Endothelial cell of umbilical vein (primary cell): ENCODE measurements at regions of chr2 and their contacts with region 1.

Region 1: DNA sequence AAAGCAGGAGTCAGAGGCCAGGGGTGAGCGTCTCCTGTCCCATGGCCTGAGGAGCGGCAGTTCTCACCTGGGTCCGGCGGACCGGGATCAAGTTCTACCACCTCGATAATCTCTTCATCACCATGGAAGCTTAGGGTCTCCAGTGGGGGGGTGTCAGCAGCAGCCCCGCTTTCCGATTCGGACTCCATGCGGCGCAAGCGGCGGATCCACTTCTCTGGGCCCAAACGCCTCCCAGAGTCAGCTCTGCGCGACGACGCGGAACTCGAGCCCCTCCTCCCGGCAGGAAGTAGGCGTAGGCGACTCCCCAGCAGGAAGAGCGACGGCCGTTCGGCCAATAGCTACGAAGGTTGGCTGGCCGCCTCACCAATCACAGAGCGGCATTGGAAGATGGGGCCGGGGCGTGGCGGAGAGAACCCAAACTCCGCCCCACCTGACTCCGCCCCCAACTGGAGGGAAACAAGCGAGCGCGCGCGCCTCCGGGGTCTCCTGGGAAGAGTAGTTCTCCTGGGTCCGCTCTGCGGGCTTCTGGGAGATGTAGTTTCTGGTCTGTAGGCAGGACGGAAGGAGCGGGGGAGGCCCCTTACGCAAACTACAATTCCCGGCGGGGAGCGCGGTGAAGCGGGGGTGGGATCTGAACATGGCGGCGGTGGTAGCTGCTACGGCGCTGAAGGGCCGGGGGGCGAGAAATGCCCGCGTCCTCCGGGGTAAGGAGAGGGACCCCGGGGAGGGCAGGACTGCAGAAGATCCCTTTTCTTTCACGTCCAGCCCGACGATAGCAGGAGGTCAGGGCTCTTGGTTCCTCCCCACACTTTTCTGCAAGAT is at the starts of genes AAMP and PNKD:
- DNase-seq: peak; percentile 100
- H3K4me3 ChIP-seq: peak within 1 kb of the TSS; percentile 87 to 92 (median 88)
- H3K27ac ChIP-seq: peak within 1 kb of the TSS; percentile 65
- H3K4me1 ChIP-seq: peaks cover 19% of the 10 kb centered on the region
- H3K27me3 ChIP-seq: no peaks in the 10 kb centered on the region
- CTCF ChIP-seq: no peak
- POLR2A ChIP-seq: peak; percentile 83
- total RNA-seq, gene AAMP: 59.7 and 69.3 TPM in 2 replicates
- total RNA-seq, gene PNKD: 56.1 and 56.6 TPM in 2 replicates

Region 2: GRCh38 chr2:218186355-218186766 is 83.7 kb before region 1 on chr2:
- CTCF ChIA-PET with region 1: no interaction called
- POLR2A ChIA-PET with region 1: no interaction called
- dilution Hi-C with region 1: no loop called
- intact Hi-C with region 1: loop called (anchors 1 kb)
- DNase-seq: peak; percentile 73
- H3K4me3 ChIP-seq: no peak overlapping the region
- H3K27ac ChIP-seq: no peak overlapping the region
- H3K4me1 ChIP-seq: no peaks in the 10 kb centered on the region
- H3K27me3 ChIP-seq: peaks cover 3 to 10% of the 10 kb centered on the region in 2 experiments
- CTCF ChIP-seq: peak; percentile 76 to 77
- POLR2A ChIP-seq: no peak

Region 3: GRCh38 chr2:218245214-218245613 is 24.9 kb before region 1 on chr2:
- CTCF ChIA-PET with region 1: no interaction called
- POLR2A ChIA-PET with region 1: no interaction called
- dilution Hi-C with region 1: no loop called
- intact Hi-C with region 1: no loop called
- DNase-seq: no peak
- H3K4me3 ChIP-seq: no peak overlapping the region
- H3K27ac ChIP-seq: no peak overlapping the region
- H3K4me1 ChIP-seq: no peaks in the 10 kb centered on the region
- H3K27me3 ChIP-seq: no peaks in the 10 kb centered on the region
- CTCF ChIP-seq: no peak
- POLR2A ChIP-seq: no peak

Region 4: GRCh38 chr2:218286570-218287459 is 16.7 kb after region 1 on chr2:
- CTCF ChIA-PET with region 1: interaction called, 51 read pairs
- POLR2A ChIA-PET with region 1: interaction called, 9 read pairs
- dilution Hi-C with region 1: no loop called
- intact Hi-C with region 1: loop called (anchors 1 kb)
- DNase-seq: peak; percentile 93
- H3K4me3 ChIP-seq: no peak overlapping the region
- H3K27ac ChIP-seq: peak overlapping the region; percentile 88
- H3K4me1 ChIP-seq: peaks cover 77% of the 10 kb centered on the region
- H3K27me3 ChIP-seq: no peaks in the 10 kb centered on the region
- CTCF ChIP-seq: no peak
- POLR2A ChIP-seq: peak; percentile 16

Region 5: GRCh38 chr2:218301176-218301819 is 31.2 kb after region 1 on chr2:
- CTCF ChIA-PET with region 1: interaction called, 14 read pairs
- POLR2A ChIA-PET with region 1: no interaction called
- dilution Hi-C with region 1: no loop called
- intact Hi-C with region 1: no loop called
- DNase-seq: peak; percentile 88
- H3K4me3 ChIP-seq: no peak overlapping the region
- H3K27ac ChIP-seq: no peak overlapping the region
- H3K4me1 ChIP-seq: peaks cover 6% of the 10 kb centered on the region
- H3K27me3 ChIP-seq: no peaks in the 10 kb centered on the region
- CTCF ChIP-seq: peak; percentile 86
- POLR2A ChIP-seq: no peak

Region 6: DNA sequence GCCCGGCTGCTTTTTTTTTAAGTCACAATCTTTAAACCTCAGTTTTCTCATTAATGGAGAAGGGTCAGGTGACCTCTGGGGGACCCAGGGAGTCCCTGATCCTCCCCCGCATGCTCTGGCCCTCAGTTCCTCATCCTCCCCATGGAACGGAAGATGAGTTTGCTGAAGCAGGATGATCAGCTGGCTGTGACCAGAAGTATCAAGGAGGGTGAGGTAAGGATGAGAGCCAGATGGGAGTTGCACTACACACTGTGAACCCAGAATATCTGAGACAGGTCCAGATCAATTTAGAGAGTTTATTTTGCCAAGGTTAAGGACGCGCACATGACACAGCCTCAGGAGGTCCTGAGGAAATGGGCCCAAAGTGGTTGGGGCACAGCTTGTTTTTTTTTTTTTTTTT is 90.3 kb after region 1 on chr2:
- CTCF ChIA-PET with region 1: interaction called, 46 read pairs
- POLR2A ChIA-PET with region 1: no interaction called
- dilution Hi-C with region 1: no loop called
- intact Hi-C with region 1: loop called (anchors 1 kb)
- DNase-seq: no peak
- H3K4me3 ChIP-seq: no peak overlapping the region
- H3K27ac ChIP-seq: no peak overlapping the region
- H3K4me1 ChIP-seq: no peaks in the 10 kb centered on the region
- H3K27me3 ChIP-seq: no peaks in the 10 kb centered on the region
- CTCF ChIP-seq: no peak
- POLR2A ChIP-seq: no peak

Region 7: DNA sequence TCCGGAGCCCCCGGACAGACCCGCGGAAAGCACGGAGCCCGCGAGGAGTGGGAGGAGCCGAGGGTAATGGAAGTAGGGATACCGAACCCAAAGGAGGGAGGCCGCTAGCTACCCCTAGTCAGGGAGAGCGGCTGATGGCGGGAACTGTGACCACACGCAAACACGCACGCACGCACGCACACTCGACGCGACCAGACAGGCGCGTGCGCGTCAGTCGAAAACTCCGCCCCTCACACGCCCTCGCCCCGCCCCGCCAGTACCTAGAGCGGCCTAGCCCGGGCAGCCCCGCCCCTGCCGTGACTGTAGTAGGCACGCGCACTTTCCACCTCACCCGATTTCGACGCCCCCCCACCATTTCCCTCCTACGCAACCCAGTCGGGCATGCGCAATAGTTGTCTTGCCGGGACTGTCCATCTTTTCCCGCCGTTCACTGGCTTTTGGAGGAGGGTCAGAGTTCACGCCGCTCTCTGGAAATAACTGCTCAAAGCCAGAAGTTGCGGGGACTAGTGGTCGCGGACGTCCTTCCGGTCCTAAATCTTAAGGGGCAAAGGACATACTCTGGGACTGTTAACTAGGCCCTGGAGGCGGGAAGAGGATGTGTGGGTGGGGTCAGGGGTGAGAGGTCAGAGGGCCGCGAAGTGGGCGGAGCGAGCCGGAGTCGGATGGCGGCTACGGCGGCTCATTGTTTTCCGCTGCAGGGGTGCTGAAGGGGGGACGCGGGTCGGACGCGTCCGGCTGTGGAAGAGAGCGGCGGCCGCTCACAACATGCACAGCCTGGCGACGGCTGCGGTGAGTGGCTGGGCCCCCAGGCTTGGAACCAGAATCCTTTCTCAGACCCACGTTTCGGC is 298.3 kb after region 1 on chr2 and contains the starts of genes CNOT9 and USP37:
- CTCF ChIA-PET with region 1: no interaction called
- POLR2A ChIA-PET with region 1: no interaction called
- dilution Hi-C with region 1: no loop called
- intact Hi-C with region 1: loop called (anchors 1 kb)
- DNase-seq: peak; percentile 99
- H3K4me3 ChIP-seq: peak within 1 kb of the TSS; percentile 58 to 81 (median 71)
- H3K27ac ChIP-seq: peak within 1 kb of the TSS; percentile 94
- H3K4me1 ChIP-seq: peaks cover 17% of the 10 kb centered on the region
- H3K27me3 ChIP-seq: no peaks in the 10 kb centered on the region
- CTCF ChIP-seq: no peak
- POLR2A ChIP-seq: peak; percentile 81
- total RNA-seq, gene CNOT9: 63.2 and 68.9 TPM in 2 replicates
- total RNA-seq, gene USP37: 13.1 and 14.4 TPM in 2 replicates